H1 (cell line): ENCODE measurements at regions of chr15 and their contacts with region 1.

Region 1: DNA sequence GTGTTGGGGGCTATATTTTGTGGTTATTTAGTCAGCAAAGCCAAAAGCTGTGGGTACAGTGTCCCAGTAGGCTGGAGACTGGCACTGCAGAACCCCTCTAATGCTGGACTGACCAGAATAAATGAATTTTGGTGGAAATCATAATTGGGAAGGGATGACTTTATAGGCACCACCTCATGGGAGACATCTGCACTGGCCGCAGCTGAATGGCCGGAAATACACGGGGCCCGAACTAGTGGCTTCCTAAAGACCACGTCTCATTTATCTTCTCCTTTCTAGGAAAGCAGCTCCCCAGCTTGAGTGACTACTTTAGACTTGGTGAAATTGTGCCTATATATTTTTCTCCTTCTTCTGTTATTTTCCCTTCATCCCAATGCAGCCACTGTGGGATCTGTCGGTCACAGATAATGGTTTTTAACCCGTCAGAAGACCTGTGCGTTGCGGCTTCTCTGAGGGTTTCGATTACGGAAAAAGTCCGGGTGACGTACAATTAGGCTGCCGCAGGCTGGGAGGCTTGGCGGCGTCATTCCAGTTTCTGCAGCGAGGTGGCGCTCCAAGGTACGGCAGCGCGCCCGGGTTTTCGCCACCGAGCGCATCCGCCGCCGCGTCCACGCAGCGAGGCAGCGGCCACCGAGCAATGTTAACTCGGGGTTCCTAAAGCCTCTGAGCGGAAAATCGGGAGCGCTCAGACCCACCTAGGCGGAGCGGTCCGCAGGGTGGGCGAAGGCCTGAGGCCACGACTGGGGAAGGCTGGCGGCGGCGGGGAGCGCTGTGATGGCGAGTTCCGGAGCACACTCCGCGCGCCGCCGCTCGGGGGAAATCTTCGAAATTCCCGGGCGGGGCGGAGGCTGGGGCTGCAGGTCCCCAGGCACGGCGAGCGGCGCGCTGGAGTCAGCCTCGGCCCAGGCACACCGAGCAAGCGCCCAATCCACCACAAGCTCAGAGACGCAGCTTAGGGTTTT is 26.3 kb downstream of the NR2F2 start:
- DNase-seq: peak in 1 of 2 experiments; percentile 96
- H3K4me3 ChIP-seq: peak overlapping the region; percentile 16 to 59 (median 36); a peak in 5 of 8 replicates
- H3K27ac ChIP-seq: no peak overlapping the region
- H3K4me1 ChIP-seq: peaks cover 1 to 32% (median 19%) of the 10 kb centered on the region in 4 experiments; a peak in 6 of 7 replicates
- H3K27me3 ChIP-seq: peaks cover 94 to 100% (median 98%) of the 10 kb centered on the region in 4 experiments
- CTCF ChIP-seq: peak; percentile 69 to 94 (median 87)
- EP300 ChIP-seq: no peak
- POLR2A ChIP-seq: no peak
- RAD21 ChIP-seq: peak; percentile 70 to 84

Region 2: DNA sequence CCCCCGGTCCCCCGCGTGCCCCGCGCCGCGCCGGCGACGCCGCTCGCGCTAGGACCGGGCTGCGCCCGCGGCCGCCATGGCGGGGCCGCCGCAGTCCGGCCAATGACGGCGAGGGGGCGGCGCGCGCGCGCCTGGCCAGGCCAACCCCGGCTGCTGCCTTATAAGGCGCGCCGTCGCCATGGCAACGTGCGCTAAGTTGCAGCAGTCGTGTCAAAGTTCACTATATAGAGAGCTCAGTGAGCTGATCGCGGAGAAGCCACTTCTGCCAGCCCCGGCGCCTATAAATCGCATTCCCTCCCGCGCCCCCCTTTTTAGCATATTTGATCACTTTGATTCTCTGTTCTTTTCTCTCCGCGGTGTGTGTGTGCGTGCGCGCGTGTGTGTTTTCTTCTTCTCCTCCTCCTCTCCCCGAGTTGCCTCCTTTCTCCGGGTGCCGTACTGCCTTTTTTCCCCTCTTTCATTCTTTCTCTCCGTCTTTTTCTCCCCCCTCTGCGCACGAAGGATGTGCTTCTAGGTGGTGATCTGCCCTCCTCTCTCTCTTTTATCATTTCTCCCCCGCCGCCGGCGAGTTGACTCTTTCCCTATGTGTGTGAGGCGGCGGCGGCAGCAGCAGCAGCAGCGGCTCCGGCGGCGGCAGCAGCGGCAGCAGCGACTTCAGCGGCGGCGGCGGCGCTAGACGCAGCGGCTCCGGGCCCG is 26.2 kb before region 1 on chr15 and contains the start of gene NR2F2:
- CTCF ChIA-PET with region 1: interaction called, 21 read pairs
- POLR2A ChIA-PET with region 1: interaction called, 3 read pairs
- DNase-seq: peak; percentile 85 to 88
- H3K4me3 ChIP-seq: peak within 1 kb of the TSS; percentile 42 to 64 (median 48)
- H3K27ac ChIP-seq: no peak within 1 kb of the TSS
- H3K4me1 ChIP-seq: peaks cover 14 to 38% (median 26%) of the 10 kb centered on the region in 4 experiments
- H3K27me3 ChIP-seq: peaks cover 75 to 94% (median 87%) of the 10 kb centered on the region in 4 experiments
- CTCF ChIP-seq: no peak
- EP300 ChIP-seq: no peak
- POLR2A ChIP-seq: no peak
- RAD21 ChIP-seq: no peak
- total RNA-seq, gene NR2F2: not detected in 2 replicates

Region 3: GRCh38 chr15:96345560-96346399 is 11.0 kb before region 1 on chr15:
- CTCF ChIA-PET with region 1: interaction called, 11 read pairs
- POLR2A ChIA-PET with region 1: interaction called, 9 read pairs
- DNase-seq: peak in 1 of 2 experiments; percentile 73
- H3K4me3 ChIP-seq: peak overlapping the region in 3 of 4 experiments; percentile 29 to 52 (median 40); a peak in 7 of 8 replicates
- H3K27ac ChIP-seq: no peak overlapping the region
- H3K4me1 ChIP-seq: peaks cover 20 to 37% (median 25%) of the 10 kb centered on the region in 4 experiments; a peak in 6 of 7 replicates
- H3K27me3 ChIP-seq: peaks cover 89 to 97% (median 93%) of the 10 kb centered on the region in 4 experiments
- CTCF ChIP-seq: peak; percentile 46 to 54 (median 54)
- EP300 ChIP-seq: no peak
- POLR2A ChIP-seq: no peak
- RAD21 ChIP-seq: peak; percentile 74 to 80

Region 4: GRCh38 chr15:96410175-96411055 is 53.6 kb after region 1 on chr15:
- CTCF ChIA-PET with region 1: interaction called, 25 read pairs
- POLR2A ChIA-PET with region 1: interaction called, 3 read pairs
- DNase-seq: peak in 1 of 2 experiments; percentile 61
- H3K4me3 ChIP-seq: no peak overlapping the region
- H3K27ac ChIP-seq: no peak overlapping the region
- H3K4me1 ChIP-seq: peaks cover 0 to 3% (median 1%) of the 10 kb centered on the region in 4 experiments; a peak in 3 of 7 replicates
- H3K27me3 ChIP-seq: peaks cover 91 to 100% (median 98%) of the 10 kb centered on the region in 4 experiments
- CTCF ChIP-seq: no peak
- EP300 ChIP-seq: no peak
- POLR2A ChIP-seq: no peak
- RAD21 ChIP-seq: no peak

Region 5: GRCh38 chr15:96416934-96417759 is 60.4 kb after region 1 on chr15:
- CTCF ChIA-PET with region 1: interaction called, 25 read pairs
- POLR2A ChIA-PET with region 1: interaction called, 6 read pairs
- DNase-seq: peak in 1 of 2 experiments; percentile 63
- H3K4me3 ChIP-seq: peak overlapping the region in 3 of 4 experiments; percentile 7 to 47 (median 13); a peak in 5 of 8 replicates
- H3K27ac ChIP-seq: no peak overlapping the region
- H3K4me1 ChIP-seq: peaks cover 4 to 15% (median 7%) of the 10 kb centered on the region in 4 experiments
- H3K27me3 ChIP-seq: peaks cover 70 to 94% (median 86%) of the 10 kb centered on the region in 4 experiments
- CTCF ChIP-seq: no peak
- EP300 ChIP-seq: no peak
- POLR2A ChIP-seq: no peak
- RAD21 ChIP-seq: peak in 1 of 2 experiments; percentile 6; a peak in 1 of 4 replicates

Region 6: DNA sequence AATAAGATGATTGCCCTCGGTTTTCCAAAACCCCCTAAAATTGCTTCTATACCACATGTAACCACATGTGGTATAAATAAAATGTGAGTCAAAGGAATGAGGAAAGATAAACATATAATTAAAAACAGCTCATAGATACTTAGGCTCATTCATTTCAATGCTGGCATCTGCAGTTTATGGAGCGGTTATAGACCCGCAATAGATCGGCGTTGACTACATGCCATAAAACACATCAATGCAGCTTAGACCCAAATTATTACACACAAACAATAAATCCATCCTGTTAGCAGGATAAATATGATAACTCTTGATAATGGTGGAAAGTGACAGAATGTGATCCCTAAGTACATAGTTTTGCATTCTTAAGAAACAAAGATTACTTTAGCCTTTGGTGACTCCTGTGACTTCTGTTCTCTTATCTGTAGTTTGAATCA is 117.5 kb after region 1 on chr15:
- CTCF ChIA-PET with region 1: no interaction called
- POLR2A ChIA-PET with region 1: no interaction called
- DNase-seq: no peak
- H3K4me3 ChIP-seq: no peak overlapping the region
- H3K27ac ChIP-seq: no peak overlapping the region
- H3K4me1 ChIP-seq: no peaks in the 10 kb centered on the region
- H3K27me3 ChIP-seq: no peaks in the 10 kb centered on the region
- CTCF ChIP-seq: no peak
- EP300 ChIP-seq: no peak
- POLR2A ChIP-seq: no peak
- RAD21 ChIP-seq: no peak